ENCODE measurements at regions of chr3 and their contacts with region 1.

Region 1: DNA sequence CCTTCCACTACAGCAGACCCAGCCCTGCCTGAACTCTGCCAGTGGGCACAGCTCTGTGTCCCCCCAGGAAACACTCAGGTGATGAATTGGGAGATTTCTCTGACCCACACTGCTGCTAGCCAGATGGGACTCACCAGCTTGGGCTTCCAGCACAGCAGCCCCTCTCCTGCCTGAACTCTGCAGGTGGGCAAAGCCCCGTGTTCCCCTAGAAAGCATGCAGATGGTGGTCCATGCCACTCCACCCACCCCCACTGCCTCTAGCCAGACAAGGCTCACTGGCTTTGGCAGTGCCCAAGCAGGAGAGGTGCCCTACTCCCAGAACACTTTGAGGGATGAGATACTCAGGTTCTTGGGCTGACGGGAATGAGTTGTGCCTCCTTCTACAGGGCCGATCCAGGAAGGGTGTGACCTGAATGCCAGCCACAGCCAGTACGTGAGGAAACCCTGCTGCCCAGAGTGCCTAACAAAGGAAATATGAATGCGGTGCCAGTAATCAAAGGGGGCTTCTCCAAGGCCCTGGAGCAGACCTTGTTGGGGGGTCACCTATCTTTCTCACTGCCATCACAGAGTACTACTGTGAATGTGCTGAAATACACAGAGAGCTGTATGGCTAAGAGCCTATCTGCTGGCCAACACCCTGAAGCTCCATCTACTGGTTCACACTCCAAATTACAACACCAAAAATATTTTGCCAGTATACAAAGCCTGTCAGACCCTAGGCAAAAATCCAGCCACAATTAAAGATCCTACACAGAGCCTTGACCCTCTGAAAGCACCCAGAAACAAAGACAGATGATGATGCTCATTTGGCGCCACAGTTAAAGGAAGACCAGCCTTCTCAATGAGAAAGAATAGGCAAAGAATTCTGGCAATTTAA is 61.9 kb downstream of the BTLA start:
- DNase-seq: no peak
- H3K4me3 ChIP-seq: no peak overlapping the region
- CTCF ChIP-seq: peak; percentile 27

Region 2: DNA sequence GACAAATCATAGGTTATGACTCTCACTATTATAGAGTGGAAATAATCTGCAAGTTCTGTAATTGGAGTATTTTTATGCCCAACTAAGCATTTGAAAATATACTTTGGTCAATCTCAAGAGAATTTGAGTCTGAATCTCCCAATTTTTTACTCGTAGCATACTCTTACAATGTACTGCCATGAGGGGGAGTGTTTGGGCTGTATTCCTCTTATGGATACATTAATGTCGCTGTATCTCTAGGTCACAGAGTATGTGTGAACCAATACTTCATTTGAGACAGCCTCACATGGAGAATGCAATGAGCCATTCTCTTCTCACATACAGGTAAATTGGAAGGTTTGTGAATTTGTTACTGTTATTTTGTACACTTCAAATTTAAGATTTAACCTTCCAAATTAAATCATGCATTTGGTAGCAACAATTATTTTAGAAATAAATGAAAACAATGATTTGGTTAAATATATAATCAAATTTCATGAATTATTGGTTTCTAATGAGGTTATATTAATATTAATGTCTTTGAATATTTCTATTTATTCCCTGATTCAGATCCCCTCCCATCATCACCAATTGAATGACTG is 109.9 kb before region 1 on chr3:
- CTCF ChIA-PET with region 1: interaction called, 15 read pairs
- POLR2A ChIA-PET with region 1: no interaction called
- DNase-seq: peak; percentile 7
- H3K4me3 ChIP-seq: no peak overlapping the region
- CTCF ChIP-seq: peak; percentile 64

Region 3: DNA sequence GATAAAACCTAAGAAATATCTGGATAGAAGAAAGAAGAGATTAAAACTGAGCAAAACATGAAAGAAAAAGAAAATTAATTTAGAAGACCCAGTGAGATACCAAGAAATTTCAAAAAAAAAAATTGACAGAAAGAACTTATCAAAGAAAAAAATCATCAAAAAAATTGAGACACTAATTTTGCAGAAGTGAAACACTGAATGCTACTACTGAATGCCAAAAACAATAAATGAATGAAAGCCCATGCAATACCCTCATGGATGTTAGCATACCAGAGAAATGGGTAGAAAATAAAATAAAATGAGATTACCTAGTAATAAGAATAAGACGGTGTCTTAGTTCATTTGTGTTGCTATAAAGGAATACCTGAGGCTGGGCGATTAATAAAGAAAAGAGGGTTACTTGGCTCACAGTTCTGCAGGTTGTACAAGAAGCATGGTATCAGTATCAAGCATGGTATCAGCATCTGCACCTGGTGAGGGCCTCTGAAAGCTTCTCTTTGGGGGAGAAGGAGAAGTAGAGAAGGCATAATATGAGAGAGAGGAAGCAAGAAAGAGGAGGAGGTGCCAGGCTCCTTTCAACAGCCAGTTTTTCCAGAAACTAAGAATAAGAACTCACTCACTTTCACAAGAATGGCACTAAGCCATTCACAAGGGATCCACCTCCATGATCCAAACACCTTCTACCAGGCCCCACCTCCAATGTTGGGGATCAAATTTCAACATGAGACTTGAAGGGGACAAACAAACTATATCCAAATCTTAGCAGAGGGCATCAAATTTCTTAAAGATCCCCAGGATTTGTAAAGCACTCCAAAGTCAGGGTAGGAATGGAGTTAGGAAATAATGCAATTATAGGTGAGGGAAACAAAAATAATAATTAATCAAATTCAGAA is 11.3 kb before region 1 on chr3:
- CTCF ChIA-PET with region 1: interaction called, 10 read pairs
- POLR2A ChIA-PET with region 1: no interaction called
- DNase-seq: no peak
- H3K4me3 ChIP-seq: no peak overlapping the region
- CTCF ChIP-seq: no peak